ENCODE measurements at regions of chr7 and their contacts with region 1.

Region 1: GRCh38 chr7:94295850-94296249 is 98.8 kb upstream of the COL1A2 start:
- DNase-seq: peak; percentile 60
- H3K4me3 ChIP-seq: peak overlapping the region; percentile 41
- H3K27me3 ChIP-seq: no peaks in the 10 kb centered on the region
- CTCF ChIP-seq: peak; percentile 75

Region 2: GRCh38 chr7:94190599-94191061 is 105.2 kb before region 1 on chr7:
- CTCF ChIA-PET with region 1: no interaction called
- POLR2A ChIA-PET with region 1: no interaction called
- DNase-seq: peak; percentile 88
- H3K4me3 ChIP-seq: no peak overlapping the region
- H3K27me3 ChIP-seq: no peaks in the 10 kb centered on the region
- CTCF ChIP-seq: no peak

Region 3: GRCh38 chr7:94348142-94348541 is 52.3 kb after region 1 on chr7:
- CTCF ChIA-PET with region 1: interaction called, 7 read pairs
- POLR2A ChIA-PET with region 1: interaction called, 11 read pairs
- DNase-seq: peak; percentile 99
- H3K4me3 ChIP-seq: no peak overlapping the region
- H3K27me3 ChIP-seq: no peaks in the 10 kb centered on the region; the same call in 1 of the 2 replicates
- CTCF ChIP-seq: no peak

Region 4: DNA sequence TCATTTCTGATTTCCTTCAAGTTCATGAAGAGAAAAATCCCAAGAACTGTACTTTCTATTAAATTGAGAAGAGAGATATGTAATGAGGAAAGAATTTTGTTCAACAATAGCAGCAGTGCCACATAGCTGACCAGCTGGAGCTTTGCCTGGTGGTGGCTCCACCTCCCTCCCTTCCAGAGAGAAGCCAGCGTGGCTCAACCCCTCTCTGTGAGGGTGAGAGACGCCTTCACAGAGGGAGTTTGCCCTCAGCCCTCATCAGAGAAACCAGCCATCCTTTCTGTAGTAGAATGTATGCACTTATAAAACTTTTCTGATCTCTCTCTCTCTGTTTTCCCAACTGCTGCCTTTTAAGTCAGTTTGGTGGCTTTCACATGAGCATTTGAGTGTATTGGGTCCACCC is 78.4 kb after region 1 on chr7:
- CTCF ChIA-PET with region 1: interaction called, 31 read pairs
- POLR2A ChIA-PET with region 1: interaction called, 104 read pairs
- DNase-seq: peak; percentile 83
- H3K4me3 ChIP-seq: peak overlapping the region; percentile 43
- H3K27me3 ChIP-seq: no peaks in the 10 kb centered on the region
- CTCF ChIP-seq: no peak

Region 5: GRCh38 chr7:94400643-94401427 is 105.0 kb after region 1 on chr7:
- CTCF ChIA-PET with region 1: interaction called, 87 read pairs
- POLR2A ChIA-PET with region 1: interaction called, 166 read pairs
- DNase-seq: no peak
- H3K4me3 ChIP-seq: peak overlapping the region; percentile 67
- H3K27me3 ChIP-seq: no peaks in the 10 kb centered on the region
- CTCF ChIP-seq: no peak

Region 6: GRCh38 chr7:94423863-94424735 is 128.2 kb after region 1 on chr7:
- CTCF ChIA-PET with region 1: interaction called, 28 read pairs
- POLR2A ChIA-PET with region 1: interaction called, 4 read pairs
- DNase-seq: peak; percentile 89
- H3K4me3 ChIP-seq: no peak overlapping the region
- H3K27me3 ChIP-seq: no peaks in the 10 kb centered on the region
- CTCF ChIP-seq: no peak